ENCODE measurements at regions of chr9 and their contacts with region 1.

Region 1: DNA sequence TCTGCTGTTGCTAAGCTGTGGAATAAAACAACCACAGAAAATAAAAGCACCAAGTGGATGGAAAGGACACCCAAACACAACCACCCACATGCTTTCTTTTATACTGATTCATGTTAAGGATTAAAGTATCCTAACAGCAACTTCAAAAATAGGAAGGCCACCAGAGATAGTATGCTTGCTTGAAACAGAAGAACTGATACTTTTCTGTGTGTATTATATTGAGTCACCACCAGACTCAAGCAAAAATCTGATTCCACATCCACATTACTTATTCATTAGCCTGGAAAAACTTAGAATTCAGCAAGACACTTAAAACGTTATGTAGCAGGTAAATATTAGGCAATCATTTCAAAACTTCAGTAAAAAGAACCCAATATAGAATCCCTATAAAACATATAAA is 52.3 kb downstream of the ZDHHC21 start:
- DNase-seq: no peak
- H3K4me3 ChIP-seq: no peak overlapping the region
- H3K27ac ChIP-seq: no peak overlapping the region
- H3K27me3 ChIP-seq: no peaks in the 10 kb centered on the region
- CTCF ChIP-seq: no peak

Region 2: DNA sequence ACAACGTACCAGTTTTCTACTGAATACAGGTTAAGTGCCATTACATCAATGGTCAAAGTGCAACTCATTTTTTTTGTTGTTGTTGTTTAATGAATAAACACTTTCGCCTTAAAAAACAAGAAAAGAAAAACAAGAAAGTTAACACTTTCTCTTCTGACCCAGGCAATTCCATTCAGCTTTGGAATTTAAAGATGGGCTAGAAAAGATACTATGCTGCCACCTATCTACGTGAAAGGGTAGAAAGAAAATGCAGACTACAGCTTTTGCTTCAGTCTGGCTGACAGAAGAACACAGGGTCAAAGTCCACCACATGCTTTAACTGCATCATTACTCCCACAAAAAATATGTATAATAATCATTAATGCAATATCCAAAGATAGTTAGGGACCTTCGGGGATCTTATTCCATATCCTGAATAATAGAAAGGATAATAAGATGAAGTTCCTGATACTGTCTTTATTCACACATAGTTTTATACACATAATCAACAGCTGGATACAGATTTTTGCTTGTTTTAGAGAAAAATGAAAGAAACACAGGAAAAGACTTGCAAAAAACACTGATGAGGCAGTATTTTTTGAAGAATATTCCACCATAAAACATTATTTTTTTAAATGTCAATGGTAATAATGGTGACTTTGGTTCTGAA is 11.9 kb after region 1 on chr9:
- CTCF ChIA-PET with region 1: interaction called, 20 read pairs
- POLR2A ChIA-PET with region 1: no interaction called
- DNase-seq: no peak
- H3K4me3 ChIP-seq: no peak overlapping the region
- H3K27ac ChIP-seq: no peak overlapping the region
- H3K27me3 ChIP-seq: no peaks in the 10 kb centered on the region
- CTCF ChIP-seq: peak; percentile 69